OCI-LY7 (cell line): ENCODE measurements at regions of chr9 and their contacts with region 1.

Region 1: GRCh38 chr9:124940693-124941453 is at the start of gene GOLGA1:
- DNase-seq: peak; percentile 95
- H3K4me3 ChIP-seq: peak within 1 kb of the TSS; percentile 81
- H3K27ac ChIP-seq: peak within 1 kb of the TSS; percentile 91
- H3K4me1 ChIP-seq: peaks cover 53% of the 10 kb centered on the region
- CTCF ChIP-seq: no peak
- total RNA-seq, gene GOLGA1: 15.1 and 19.2 TPM in 2 replicates

Region 2: DNA sequence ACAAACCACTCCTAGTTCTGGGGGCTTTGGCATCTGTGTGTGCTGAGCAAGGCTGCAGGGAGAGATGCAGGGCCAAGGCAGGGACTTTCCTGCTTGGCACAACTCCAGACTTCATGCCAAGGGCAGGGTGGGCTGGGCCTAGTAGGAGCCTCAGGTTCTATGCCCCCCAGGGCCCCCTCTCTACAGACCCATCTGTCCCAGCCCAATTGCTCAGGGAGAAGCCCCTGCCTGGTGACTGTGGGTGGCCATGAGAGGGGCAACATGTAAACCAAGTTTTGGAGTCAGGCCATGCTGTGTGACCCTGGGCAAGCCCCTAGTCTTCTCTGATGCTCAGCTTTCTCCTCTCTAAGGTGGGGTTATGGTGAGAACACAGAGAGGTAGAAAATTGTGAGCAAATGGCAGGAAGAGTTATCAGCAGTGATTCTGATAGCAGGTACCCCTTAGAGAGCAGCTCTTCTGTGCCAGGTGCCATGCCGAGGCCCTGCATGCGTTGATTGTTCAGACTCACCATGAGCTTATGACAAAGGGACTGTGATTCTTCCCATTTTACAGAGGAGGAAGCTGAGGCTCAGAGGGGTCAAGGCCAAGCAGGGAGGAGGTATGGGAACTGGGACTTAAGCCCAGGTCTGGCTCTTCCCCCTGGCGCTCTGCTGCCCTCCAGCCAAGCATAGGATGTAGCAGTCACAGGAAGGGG is 158.8 kb before region 1 on chr9:
- CTCF ChIA-PET with region 1: no interaction called
- POLR2A ChIA-PET with region 1: no interaction called
- intact Hi-C with region 1: no loop called
- DNase-seq: no peak
- H3K4me3 ChIP-seq: no peak overlapping the region
- H3K27ac ChIP-seq: no peak overlapping the region
- H3K4me1 ChIP-seq: no peaks in the 10 kb centered on the region
- CTCF ChIP-seq: no peak

Region 3: DNA sequence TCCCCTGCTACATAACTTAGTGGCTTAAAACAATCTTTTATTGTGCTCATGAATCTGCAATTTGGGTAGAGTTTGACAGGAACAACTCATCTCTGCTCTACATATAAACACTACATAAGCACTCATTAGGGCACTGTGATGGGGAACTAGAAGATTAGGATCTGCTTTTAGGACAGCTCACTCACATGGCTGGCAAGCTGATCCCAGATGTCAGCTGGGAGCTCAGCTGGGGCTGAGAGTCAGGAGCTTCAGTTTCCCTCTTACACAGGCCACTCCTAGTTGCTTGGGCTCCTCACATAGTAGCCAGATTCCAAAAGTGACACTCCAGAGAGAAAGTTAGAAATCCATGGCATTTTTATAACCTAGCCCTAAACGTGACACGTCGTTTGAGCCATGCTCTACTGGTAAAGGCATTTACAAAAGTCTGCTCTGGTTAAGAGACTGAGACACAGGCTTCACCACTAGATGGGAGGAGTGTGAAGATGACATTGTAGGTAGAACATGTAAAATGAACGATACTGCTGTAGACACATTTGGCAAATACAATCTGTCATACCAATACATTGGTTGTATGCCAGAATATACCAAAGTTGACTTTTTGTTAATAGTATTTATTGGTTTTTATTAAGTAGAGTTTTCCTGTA is 178.9 kb after region 1 on chr9:
- CTCF ChIA-PET with region 1: no interaction called
- POLR2A ChIA-PET with region 1: no interaction called
- intact Hi-C with region 1: loop called (anchors 2 kb)
- DNase-seq: peak; percentile 47
- H3K4me3 ChIP-seq: no peak overlapping the region
- H3K27ac ChIP-seq: peak overlapping the region; percentile 91
- H3K4me1 ChIP-seq: peaks cover 47% of the 10 kb centered on the region
- CTCF ChIP-seq: peak; percentile 61

Region 4: DNA sequence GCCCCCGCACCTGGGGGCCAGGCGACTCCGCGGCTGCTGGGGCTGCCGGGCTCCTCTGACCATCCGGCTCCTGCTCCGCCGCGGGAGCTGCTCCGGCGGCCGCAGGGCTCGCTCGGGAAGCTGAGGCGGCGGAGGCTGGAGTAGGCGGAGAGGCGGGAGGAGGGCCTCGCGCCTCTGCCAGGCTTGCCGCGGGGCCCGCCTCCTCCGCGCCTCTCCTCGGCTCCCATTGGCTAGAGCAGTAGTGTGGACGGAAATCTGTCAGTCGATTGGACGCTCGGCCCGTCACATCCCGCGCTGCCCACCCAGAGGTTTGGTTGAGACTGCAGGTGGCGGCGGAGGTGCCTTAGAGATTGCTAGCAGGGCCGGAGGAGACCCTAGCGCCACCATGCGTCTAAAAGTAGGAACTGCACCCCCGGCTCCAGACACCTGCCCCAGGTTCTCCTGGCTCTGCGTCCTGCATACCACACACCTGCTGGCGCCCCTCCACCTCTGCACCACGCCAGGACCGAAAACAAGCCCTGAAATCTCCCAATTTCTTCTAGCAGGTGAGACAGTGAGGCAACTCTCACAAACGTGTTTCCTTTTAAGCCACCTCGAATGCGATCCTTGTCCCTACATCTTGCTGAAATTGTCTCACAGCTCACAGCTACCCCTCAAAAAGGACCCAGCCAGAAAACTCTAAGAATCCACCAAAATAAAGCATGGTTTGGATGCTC is 202.7 kb after region 1 on chr9 and contains the start of gene SCAI:
- CTCF ChIA-PET with region 1: no interaction called
- POLR2A ChIA-PET with region 1: no interaction called
- intact Hi-C with region 1: loop called (anchors 1 kb)
- DNase-seq: peak; percentile 99
- H3K4me3 ChIP-seq: peak within 1 kb of the TSS; percentile 82
- H3K27ac ChIP-seq: peak within 1 kb of the TSS; percentile 40
- H3K4me1 ChIP-seq: peaks cover 22% of the 10 kb centered on the region
- CTCF ChIP-seq: peak; percentile 91
- total RNA-seq, gene SCAI: 23.8 and 25.0 TPM in 2 replicates